HCT116 (cell line): ENCODE measurements at regions of chr3 and their contacts with region 1.

Region 1: GRCh38 chr3:49007068-49007770 is at the start of gene WDR6:
- DNase-seq: peak; percentile 94
- ATAC-seq: peak; percentile 91
- H3K4me3 ChIP-seq: peak within 1 kb of the TSS; percentile 72 to 86
- H3K27ac ChIP-seq: peak within 1 kb of the TSS; percentile 99
- H3K4me1 ChIP-seq: peaks cover 3 to 26% of the 10 kb centered on the region in 2 experiments; a peak in 3 of 4 replicates
- H3K27me3 ChIP-seq: no peaks in the 10 kb centered on the region
- CTCF ChIP-seq: peak in 2 of 3 experiments; percentile 44 to 61; a peak in 3 of 6 replicates
- POLR2A ChIP-seq: peak; percentile 74
- RAD21 ChIP-seq: no peak
- total RNA-seq, gene WDR6: 174 TPM

Region 2: DNA sequence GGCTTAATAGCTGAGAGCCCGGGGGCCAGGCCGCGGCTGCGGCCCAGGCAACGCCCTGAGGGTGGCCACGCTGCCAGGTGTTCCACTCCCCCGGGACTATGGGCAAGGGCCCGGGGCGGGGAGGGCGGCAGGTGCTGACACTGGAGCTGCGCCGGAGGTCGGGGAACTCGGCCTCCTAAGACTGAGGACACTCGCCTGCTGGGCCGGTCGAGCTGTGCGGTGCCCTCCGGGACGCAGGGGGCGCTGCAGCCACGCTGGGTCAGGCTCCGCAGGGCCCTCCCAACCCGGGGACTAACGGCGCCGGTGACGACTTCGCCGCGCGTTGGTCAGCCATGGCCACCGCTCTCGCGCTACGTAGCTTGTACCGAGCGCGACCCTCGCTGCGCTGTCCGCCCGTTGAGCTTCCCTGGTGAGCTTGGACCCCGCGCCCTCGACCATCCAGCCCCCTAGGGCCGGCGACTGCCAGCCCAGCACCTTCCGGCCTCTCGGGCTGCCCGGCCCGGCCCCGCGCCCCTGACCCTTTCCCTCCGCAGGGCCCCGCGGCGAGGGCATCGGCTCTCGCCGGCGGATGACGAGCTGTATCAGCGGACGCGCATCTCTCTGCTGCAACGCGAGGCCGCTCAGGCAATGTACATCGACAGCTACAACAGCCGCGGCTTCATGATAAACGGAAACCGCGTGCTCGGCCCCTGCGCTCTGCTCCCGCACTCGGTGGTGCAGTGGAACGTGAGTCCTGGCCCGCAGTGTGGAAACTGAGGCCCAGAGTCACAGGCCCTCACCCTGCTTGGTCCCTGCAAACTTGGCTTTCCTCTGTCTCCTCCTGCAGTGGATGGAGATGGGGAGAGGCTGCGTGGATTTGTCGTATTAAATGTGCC is 14.8 kb after region 1 on chr3 and contains the start of gene NDUFAF3:
- CTCF ChIA-PET with region 1: interaction called, 27 read pairs
- POLR2A ChIA-PET with region 1: interaction called, 52 read pairs
- RAD21 ChIA-PET with region 1: interaction called in 1 of 2 experiments, 3 read pairs
- intact Hi-C with region 1: loop called (anchors 1 kb)
- DNase-seq: peak; percentile 90
- ATAC-seq: peak; percentile 66
- H3K4me3 ChIP-seq: peak within 1 kb of the TSS; percentile 80 to 98
- H3K27ac ChIP-seq: peak within 1 kb of the TSS; percentile 99
- H3K4me1 ChIP-seq: peaks cover 17 to 62% of the 10 kb centered on the region in 2 experiments
- H3K27me3 ChIP-seq: no peaks in the 10 kb centered on the region
- CTCF ChIP-seq: peak in 2 of 3 experiments; percentile 82 to 92; a peak in 4 of 6 replicates
- POLR2A ChIP-seq: peak; percentile 72
- RAD21 ChIP-seq: no peak
- total RNA-seq, gene NDUFAF3: 91.0 TPM